Activated CD4-positive, alpha-beta memory T cell treated with anti-CD3 and anti-CD28 coated beads for 36 hours (primary cell): ENCODE measurements at regions of chr10 and their contacts with region 1.

Region 1: DNA sequence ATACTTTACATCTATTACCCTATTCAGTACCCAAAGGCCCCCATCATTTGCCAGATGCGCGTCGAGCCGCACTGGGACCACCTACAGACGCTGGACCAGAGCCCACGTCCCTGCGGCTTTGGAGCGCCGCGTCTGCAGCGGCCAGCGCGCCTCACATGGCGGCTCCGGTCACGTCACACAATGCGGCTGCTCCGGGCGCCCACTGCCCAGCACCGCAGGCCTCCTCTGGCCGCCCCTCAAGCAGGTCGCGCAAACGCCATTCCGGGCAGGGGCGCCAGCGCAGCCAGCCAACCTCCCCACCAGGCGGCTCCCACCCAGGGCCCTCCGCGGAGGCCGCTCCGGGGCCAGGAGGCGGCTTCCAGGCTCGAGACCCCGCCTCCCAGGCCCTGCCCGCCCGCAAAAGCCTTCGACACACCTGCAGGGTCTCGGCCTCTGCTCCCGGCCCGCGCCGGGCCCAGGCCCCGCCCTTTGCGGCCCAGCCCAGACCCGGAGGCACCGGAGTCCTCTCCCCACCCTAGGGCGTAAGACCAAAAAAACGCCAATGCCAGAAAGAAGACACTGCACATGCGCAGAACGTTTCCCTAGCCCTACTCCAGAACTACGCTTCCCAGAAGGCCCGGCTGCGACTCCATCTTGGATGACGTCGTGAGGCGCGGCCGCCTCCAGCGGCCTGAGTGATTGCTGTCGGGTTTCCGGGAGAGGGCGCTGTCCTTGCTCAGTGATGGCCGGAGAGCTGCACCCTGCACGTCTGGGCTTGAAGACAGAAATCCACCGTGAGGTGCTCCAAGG is at the start of gene ZNF25:
- DNase-seq: peak; percentile 99
- H3K4me3 Mint-ChIP-seq: peak within 1 kb of the TSS; percentile 92
- H3K27ac Mint-ChIP-seq: peak within 1 kb of the TSS; percentile 94
- H3K4me1 Mint-ChIP-seq: peaks cover 15% of the 10 kb centered on the region
- H3K27me3 Mint-ChIP-seq: no peaks in the 10 kb centered on the region
- total RNA-seq, gene ZNF25: 7.4 to 8.8 TPM

Region 2: DNA sequence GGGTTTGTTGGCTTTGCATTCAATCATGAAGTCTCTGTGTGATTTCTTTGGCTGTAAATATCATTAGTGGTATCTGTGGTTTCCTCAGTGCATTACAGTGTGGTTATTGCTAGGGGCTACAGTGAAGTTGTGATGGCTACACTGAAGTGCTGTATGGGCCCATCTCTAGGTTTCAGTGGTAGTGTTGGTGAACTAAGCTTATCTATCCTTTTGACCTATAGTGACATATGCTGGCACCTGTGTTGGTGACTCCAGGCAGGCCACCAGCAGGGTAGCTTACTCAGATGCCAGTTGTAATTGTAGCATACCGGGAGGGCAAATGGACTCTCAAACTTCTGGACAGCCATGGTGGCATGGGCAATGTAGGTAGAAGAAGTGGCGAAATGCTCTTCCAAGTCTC is 631.9 kb before region 1 on chr10:
- CTCF ChIA-PET with region 1: no interaction called
- POLR2A ChIA-PET with region 1: no interaction called
- intact Hi-C with region 1: no loop called
- DNase-seq: no peak
- H3K4me3 Mint-ChIP-seq: no peak overlapping the region
- H3K27ac Mint-ChIP-seq: no peak overlapping the region
- H3K4me1 Mint-ChIP-seq: no peaks in the 10 kb centered on the region
- H3K27me3 Mint-ChIP-seq: no peaks in the 10 kb centered on the region

Region 3: DNA sequence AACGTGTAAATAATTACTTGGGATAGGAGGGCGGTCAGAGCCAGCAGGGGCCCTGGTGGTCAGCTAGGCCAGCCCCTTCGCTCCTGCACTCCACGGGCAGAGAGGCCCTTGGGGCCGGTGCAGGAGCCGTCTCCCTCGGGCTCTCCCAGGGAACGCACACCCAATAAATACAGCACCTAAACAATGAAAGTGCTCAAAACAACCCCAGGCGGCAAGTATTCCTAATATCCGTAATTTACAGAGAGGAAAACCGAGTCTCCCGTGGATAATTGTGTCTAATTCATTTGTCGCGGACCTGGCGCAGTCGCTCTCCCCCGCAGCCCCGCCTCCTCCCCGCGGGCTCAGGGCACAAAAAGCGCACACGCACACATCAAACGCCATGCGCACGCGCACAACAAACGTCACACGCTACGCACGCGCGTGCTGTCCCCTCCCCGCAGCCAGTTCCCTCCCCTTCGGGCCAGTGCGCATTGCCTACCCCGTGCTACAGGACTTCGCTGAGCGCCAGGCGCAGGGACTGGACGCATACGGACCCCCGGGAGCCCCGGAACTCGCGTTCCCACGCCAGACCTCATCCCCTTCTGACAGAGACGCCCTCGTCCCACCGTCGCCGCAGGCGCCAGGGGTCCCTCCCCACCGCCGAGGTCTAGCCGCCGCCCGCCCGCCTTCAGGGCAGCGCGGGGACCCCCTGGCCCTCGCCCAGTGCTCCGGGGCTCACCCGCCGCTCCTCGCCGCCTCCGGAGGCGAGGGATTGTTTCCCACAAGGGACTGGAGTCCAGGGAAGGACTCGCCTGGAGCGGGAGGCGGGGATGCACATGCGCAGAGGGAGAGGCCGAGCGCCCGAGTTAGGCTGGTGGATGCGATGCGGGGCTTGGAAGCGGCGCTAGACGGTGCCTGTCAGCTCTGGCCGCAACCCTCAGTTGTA is 118.7 kb before region 1 on chr10 and contains the start of gene ZNF248:
- CTCF ChIA-PET with region 1: interaction called, 3 read pairs
- POLR2A ChIA-PET with region 1: interaction called, 4 read pairs
- intact Hi-C with region 1: loop called (anchors 1 kb)
- DNase-seq: peak; percentile 95
- H3K4me3 Mint-ChIP-seq: peak within 1 kb of the TSS; percentile 96
- H3K27ac Mint-ChIP-seq: peak within 1 kb of the TSS; percentile 94
- H3K4me1 Mint-ChIP-seq: peaks cover 37% of the 10 kb centered on the region
- H3K27me3 Mint-ChIP-seq: peaks cover 1% of the 10 kb centered on the region
- total RNA-seq, gene ZNF248: 6.1 to 7.4 TPM

Region 4: DNA sequence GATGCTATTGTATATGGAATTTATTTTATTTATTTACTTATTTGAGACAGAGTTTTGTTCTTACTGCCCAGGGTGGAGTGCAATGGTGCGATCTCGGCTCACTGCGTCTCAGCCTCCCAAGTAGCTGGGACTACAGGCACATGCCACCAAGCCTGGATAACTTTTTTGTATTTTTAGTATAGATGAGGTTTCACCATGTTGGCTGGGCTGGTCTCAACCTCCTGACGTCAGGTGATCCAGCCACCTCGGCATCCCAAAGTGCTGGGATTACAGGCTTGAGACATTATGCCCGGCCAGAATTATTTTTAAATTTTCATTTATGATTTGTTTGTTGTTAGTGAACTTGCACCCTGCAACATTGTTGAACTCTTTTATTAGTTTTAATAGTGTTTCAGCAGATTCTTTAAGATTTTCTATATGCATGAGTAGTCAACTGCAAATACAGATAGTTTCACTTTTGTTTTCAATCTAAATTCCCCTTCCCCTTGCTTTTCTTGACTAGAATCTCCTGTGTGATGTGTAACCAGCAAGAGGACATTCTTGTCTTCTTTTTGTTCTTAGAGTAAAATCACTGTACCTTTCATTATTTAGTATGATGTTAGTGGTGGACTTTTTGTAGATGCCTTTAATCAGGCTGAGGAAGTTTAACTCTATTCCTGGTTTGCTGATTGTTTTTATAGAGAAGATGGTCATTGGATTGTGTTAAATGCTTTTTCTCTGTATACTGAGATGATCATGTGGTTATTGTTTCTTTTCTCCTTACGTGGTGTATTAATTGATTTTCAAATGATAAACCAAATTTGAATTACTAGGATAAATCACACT is 62.0 kb after region 1 on chr10:
- CTCF ChIA-PET with region 1: interaction called, 4 read pairs
- POLR2A ChIA-PET with region 1: no interaction called
- intact Hi-C with region 1: loop called (anchors 1 kb)
- DNase-seq: peak; percentile 13
- H3K4me3 Mint-ChIP-seq: peak overlapping the region; percentile 75
- H3K27ac Mint-ChIP-seq: peak overlapping the region; percentile 92
- H3K4me1 Mint-ChIP-seq: peaks cover 36% of the 10 kb centered on the region
- H3K27me3 Mint-ChIP-seq: no peaks in the 10 kb centered on the region